GM12878 (cell line): ENCODE measurements at regions of chr15 and their contacts with region 1.

Region 1: DNA sequence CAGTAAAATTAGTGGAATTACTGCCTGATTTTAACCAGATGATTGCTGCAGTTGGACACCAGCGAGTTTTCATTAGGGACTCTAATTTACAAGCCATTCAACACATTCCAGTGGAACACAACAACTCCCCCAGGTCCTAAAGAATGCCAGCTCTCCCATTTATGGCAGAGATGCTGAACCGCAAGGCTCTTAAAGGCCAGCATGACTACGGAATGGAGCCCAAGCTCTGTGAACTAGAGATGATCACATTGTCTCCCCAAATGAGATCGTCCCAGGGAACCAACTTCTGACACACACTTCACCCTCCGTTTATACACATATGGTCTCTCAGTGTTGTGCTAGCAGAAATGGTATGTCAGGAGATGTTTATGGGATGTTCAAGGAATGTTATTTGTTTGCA is 446.2 kb upstream of the NR2F2 start:
- DNase-seq: no peak
- ATAC-seq: no peak
- H3K4me3 ChIP-seq: no peak overlapping the region
- H3K27ac ChIP-seq: no peak overlapping the region
- H3K4me1 ChIP-seq: peaks cover 6% of the 10 kb centered on the region; the same call in 1 of the 2 replicates
- H3K27me3 ChIP-seq: no peaks in the 10 kb centered on the region
- CTCF ChIP-seq: no peak
- EP300 ChIP-seq: no peak
- POLR2A ChIP-seq: no peak
- RAD21 ChIP-seq: no peak

Region 2: DNA sequence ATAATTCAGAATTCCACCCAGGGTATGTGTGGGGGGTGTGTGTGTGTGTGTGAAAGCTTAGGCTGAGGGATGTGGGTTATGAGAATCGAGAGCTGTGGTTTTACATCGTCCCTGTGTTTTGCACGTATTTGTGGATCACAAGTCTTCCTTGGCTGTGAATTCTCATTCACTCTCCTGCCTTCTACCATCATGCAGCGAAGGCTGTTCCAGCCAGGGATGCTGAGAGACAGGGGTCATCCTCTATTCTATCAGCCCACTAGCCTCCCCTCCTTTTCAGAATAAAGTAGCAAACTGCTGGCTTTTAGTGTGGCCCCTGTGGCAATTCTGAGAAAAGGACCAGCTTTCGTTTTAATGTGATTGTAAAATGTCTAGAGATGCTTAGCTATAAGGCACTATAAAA is 14.4 kb before region 1 on chr15:
- CTCF ChIA-PET with region 1: interaction called, 4 read pairs
- POLR2A ChIA-PET with region 1: interaction called, 4 read pairs
- RAD21 ChIA-PET with region 1: no interaction called
- SMC1A ChIA-PET with region 1: interaction called, 17 read pairs
- in situ Hi-C with region 1: no loop called
- intact Hi-C with region 1: no loop called
- DNase-seq: no peak
- ATAC-seq: peak; percentile 66
- H3K4me3 ChIP-seq: no peak overlapping the region
- H3K27ac ChIP-seq: no peak overlapping the region
- H3K4me1 ChIP-seq: 0 out of 2 replicates have a peak, but pooled peaks cover 3% of the 10 kb centered on the region
- H3K27me3 ChIP-seq: no peaks in the 10 kb centered on the region
- CTCF ChIP-seq: no peak
- EP300 ChIP-seq: 0 out of 4 replicates have a peak, but pooled peaks of 1 of the 2 experiments have one; percentile 12
- POLR2A ChIP-seq: no peak
- RAD21 ChIP-seq: no peak

Region 3: GRCh38 chr15:95897651-95898050 is 13.4 kb after region 1 on chr15:
- CTCF ChIA-PET with region 1: interaction called, 3 read pairs
- POLR2A ChIA-PET with region 1: interaction called, 4 read pairs
- RAD21 ChIA-PET with region 1: interaction called, 3 read pairs
- SMC1A ChIA-PET with region 1: interaction called, 11 read pairs
- in situ Hi-C with region 1: no loop called
- intact Hi-C with region 1: no loop called
- DNase-seq: no peak
- ATAC-seq: no peak
- H3K4me3 ChIP-seq: no peak overlapping the region
- H3K27ac ChIP-seq: no peak overlapping the region
- H3K4me1 ChIP-seq: no peaks in the 10 kb centered on the region
- H3K27me3 ChIP-seq: no peaks in the 10 kb centered on the region
- CTCF ChIP-seq: no peak
- EP300 ChIP-seq: no peak
- POLR2A ChIP-seq: no peak
- RAD21 ChIP-seq: no peak

Region 4: DNA sequence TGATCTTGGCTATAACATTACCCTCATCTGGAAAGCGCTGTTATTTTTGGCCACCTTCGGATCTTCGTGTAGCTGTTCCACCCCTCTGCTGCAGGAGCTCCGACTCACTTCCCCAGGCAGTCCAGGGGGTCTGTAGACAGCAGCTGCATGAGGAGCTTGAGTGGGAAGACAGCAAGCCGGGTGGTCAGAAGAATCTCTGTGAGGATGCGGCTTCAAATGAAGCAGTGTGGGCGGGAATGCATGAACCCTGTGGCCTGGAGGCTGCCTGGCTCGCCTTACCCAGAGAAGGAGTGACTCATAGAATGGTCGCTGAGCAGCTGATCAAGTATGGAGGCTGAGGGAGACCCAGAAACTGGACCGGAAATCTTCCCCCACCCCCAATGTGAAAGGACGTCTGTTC is 401.0 kb after region 1 on chr15:
- CTCF ChIA-PET with region 1: no interaction called
- POLR2A ChIA-PET with region 1: no interaction called
- RAD21 ChIA-PET with region 1: no interaction called
- SMC1A ChIA-PET with region 1: no interaction called
- in situ Hi-C with region 1: no loop called
- intact Hi-C with region 1: no loop called
- DNase-seq: no peak
- ATAC-seq: no peak
- H3K4me3 ChIP-seq: no peak overlapping the region
- H3K27ac ChIP-seq: no peak overlapping the region
- H3K4me1 ChIP-seq: no peaks in the 10 kb centered on the region
- H3K27me3 ChIP-seq: no peaks in the 10 kb centered on the region
- CTCF ChIP-seq: no peak
- EP300 ChIP-seq: no peak
- POLR2A ChIP-seq: no peak
- RAD21 ChIP-seq: no peak